ENCODE measurements at regions of chr17 and their contacts with region 1.

Region 1: GRCh38 chr17:48878918-48879898 is 13.4 kb upstream of the ATP5MC1 start:
- DNase-seq: peak; percentile 52
- H3K4me3 Mint-ChIP-seq: no peak overlapping the region
- H3K27ac Mint-ChIP-seq: no peak overlapping the region
- H3K4me1 Mint-ChIP-seq: peaks cover 12% of the 10 kb centered on the region
- H3K27me3 Mint-ChIP-seq: peaks cover 3% of the 10 kb centered on the region

Region 2: DNA sequence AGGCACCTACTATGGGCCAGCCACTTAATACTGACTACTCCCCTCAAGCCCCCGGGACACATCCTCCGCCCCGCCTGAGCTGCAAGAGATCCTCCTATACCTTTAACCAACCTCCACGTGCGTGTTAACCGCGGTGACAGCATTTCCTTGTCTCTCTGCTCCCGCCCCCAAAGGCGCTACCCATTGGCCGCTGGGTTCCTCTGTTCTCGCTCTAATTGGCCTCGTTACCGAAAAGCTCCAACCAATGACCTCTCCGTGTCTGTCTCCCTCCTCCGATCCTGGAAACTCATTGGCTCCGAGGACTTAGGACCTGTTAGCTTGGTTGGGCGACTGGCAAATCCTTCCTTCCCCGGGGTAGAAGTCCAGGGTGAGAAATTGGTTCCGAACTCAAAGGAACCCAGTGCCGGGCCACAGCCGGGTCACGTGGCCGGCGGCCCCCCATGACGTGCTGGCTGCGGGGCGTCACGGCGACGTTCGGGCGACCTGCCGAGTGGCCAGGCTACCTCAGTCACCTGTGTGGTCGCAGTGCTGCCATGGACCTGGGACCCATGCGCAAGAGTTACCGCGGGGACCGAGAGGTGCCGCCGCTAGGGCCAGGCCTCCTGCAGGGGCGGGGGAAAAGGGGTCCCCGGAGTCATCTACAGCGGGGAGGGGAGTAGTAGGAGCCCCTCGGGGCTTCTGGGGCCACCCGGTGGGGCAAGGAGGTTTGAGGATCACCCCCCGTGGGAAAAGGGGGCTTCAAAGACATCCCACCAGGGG is 937.8 kb before region 1 on chr17 and contains the start of gene PNPO:
- intact Hi-C with region 1: no loop called
- DNase-seq: peak; percentile 95
- H3K4me3 Mint-ChIP-seq: peak within 1 kb of the TSS; percentile 82
- H3K27ac Mint-ChIP-seq: peak within 1 kb of the TSS; percentile 90
- H3K4me1 Mint-ChIP-seq: peaks cover 37% of the 10 kb centered on the region
- H3K27me3 Mint-ChIP-seq: no peaks in the 10 kb centered on the region
- total RNA-seq, gene PNPO: 41.0 and 45.9 TPM in 2 replicates

Region 3: GRCh38 chr17:48678141-48678971 is 200.9 kb before region 1 on chr17:
- intact Hi-C with region 1: loop called (anchors 5 kb)
- DNase-seq: peak; percentile 54
- H3K4me3 Mint-ChIP-seq: no peak overlapping the region
- H3K27ac Mint-ChIP-seq: no peak overlapping the region
- H3K4me1 Mint-ChIP-seq: peaks cover 5% of the 10 kb centered on the region
- H3K27me3 Mint-ChIP-seq: peaks cover 42% of the 10 kb centered on the region

Region 4: DNA sequence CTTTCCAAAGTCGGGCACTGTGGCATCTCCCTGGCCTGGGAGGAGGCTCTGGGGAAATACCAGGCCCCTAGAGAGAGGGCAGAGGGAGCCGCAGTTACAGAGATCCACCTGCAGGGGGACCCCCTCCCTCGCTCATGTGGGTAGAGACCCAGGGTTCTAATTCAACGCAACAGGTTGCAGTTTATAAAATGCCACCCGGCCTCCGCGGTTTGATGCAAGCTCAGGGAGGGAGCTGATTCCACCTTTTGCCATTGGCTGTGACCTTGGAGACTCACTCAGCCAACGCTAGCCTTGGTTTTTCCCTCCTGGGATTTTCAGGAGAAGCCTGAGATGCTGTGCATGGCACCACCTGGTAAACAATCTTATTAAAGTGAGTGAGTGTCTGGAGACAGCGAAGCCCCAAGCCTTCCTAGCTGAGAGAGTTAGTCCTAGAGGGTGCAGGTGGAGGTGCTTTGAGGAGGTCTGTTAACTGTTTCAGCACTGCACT is 74.2 kb before region 1 on chr17:
- intact Hi-C with region 1: loop called (anchors 1 kb)
- DNase-seq: peak; percentile 57
- H3K4me3 Mint-ChIP-seq: no peak overlapping the region
- H3K27ac Mint-ChIP-seq: no peak overlapping the region
- H3K4me1 Mint-ChIP-seq: no peaks in the 10 kb centered on the region
- H3K27me3 Mint-ChIP-seq: peaks cover 24% of the 10 kb centered on the region

Region 5: DNA sequence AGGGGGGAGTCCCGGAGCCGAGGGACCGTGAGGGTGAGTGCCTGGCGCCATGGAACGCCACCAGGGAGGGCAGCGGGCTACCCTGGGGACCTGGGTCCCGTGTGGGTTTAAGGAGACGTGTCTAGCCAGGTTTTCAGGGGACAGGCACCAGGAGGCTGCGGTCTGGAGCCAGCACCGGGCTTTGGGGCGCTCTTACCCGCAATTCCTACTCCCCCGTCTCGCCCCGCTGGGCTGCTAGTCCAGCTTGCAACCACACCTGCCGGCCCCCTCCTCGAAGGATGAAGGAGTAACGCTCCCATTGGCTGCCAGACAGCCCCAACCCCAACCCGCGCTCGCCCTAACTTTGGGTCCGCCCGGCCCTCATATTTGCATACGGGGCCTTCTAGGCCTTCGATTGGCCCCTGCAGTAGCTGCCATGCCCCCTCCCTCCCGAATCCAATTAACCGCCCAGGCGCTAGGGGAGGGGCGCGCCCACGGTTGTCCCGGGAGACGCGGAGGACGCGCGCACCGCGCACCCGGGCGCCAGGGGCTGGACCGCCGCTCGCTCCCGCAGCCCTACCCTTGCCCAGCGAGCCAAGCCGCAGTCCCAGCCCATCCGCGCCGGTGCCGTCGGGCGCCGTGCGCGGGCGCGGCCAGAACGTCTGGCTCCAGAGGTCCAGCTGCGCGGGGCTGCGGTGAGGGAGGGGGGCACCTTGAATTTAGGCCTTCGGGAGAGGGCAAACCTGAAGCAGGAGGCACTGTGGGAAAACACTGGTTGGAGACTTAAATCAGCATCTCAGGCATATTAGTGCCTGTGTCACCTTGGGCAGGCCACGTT is 62.2 kb before region 1 on chr17 and contains the start of gene TTLL6:
- intact Hi-C with region 1: loop called (anchors 1 kb)
- DNase-seq: peak; percentile 84
- H3K4me3 Mint-ChIP-seq: peak within 1 kb of the TSS; percentile 77
- H3K27ac Mint-ChIP-seq: no peak within 1 kb of the TSS
- H3K4me1 Mint-ChIP-seq: peaks cover 15% of the 10 kb centered on the region
- H3K27me3 Mint-ChIP-seq: peaks cover 64% of the 10 kb centered on the region
- total RNA-seq, gene TTLL6: 0.07 TPM in 1 of 2 replicates, not detected in the other

Region 6: DNA sequence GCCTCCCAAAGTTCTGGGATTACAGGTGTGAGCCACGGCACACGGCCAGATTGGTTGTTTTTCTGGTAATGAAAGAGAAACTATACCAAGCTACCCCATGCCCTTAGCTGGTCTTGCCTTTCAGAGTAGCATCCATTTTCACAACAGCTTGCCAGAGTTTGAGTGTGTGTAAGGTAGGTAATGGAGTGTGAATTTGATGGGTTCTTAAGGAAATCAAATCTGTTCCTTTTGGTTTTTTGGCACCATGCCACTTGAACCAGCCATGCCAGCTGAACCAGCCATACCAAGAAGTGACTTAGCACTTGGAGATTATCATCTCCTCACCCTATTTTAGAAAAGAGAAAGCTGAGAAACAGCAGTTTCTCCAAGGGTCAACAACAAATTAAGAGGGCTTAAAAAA is 43.2 kb before region 1 on chr17:
- intact Hi-C with region 1: loop called (anchors 2 kb)
- DNase-seq: no peak
- H3K4me3 Mint-ChIP-seq: peak overlapping the region; percentile 11
- H3K27ac Mint-ChIP-seq: no peak overlapping the region
- H3K4me1 Mint-ChIP-seq: peaks cover 73% of the 10 kb centered on the region
- H3K27me3 Mint-ChIP-seq: no peaks in the 10 kb centered on the region